Activated naive CD4-positive, alpha-beta T cell treated with anti-CD3 and anti-CD28 coated beads, Interleukin-2, amount 10 ng/mL, durations not matched to agents 7 days and 5 days (primary cell): ENCODE measurements at regions of chr10 and their contacts with region 1.

Region 1: GRCh38 chr10:13180788-13181187 is 19.4 kb downstream of the MCM10 start:
- DNase-seq: no peak
- H3K4me3 Mint-ChIP-seq: no peak overlapping the region
- H3K27ac Mint-ChIP-seq: no peak overlapping the region
- H3K4me1 Mint-ChIP-seq: no peaks in the 10 kb centered on the region
- H3K27me3 Mint-ChIP-seq: no peaks in the 10 kb centered on the region

Region 2: DNA sequence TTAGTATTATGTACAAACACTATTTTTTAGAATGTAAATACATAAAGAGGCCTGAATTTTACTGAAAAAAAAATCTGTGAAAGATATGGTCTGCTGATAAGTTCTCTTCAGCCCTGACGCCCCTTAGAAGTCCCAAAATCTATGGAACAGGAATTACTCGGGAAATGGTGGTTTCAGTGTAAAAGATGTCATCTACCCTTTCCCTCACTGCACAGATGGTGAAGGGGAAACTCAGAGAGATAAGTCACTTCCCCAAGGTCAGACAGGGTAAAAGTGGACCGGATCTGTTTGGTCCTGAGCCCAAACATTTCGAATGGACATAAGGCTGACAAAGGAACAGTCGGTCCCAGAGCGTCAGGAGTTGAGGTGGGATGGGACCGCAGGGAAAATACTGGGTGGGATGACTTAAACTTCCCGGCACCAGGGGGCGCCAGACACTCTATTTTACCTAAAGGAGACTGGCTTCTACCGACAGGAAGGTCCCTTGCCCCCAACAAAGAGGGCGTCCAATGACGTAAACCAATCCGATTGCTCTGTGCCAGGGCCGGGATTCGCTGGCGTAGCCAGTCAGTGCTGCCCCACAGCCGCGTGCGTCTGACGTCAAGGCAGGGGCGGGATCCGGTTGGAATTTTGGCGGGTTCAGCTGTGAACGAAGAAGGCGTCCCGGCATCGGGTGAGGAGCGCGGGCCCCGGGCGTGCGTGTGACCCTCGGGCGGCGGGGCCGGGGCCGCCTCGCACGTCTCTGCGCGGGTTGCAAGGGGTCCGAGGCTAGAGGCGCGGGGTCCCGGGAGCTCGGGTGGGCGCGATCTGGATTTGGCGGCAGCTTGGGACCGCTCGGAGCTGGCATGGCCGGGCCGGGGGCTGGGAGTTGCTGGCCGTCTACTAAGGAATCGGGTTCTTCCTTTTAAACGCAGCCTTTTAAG is 19.6 kb before region 1 on chr10 and contains the start of gene MCM10:
- CTCF ChIA-PET with region 1: interaction called, 10 read pairs
- DNase-seq: peak; percentile 99
- H3K4me3 Mint-ChIP-seq: peak within 1 kb of the TSS; percentile 88
- H3K27ac Mint-ChIP-seq: peak within 1 kb of the TSS; percentile 81
- H3K4me1 Mint-ChIP-seq: peaks cover 34% of the 10 kb centered on the region
- H3K27me3 Mint-ChIP-seq: no peaks in the 10 kb centered on the region

Region 3: GRCh38 chr10:13247784-13248183 is 67.0 kb after region 1 on chr10:
- CTCF ChIA-PET with region 1: no interaction called
- DNase-seq: no peak
- H3K4me3 Mint-ChIP-seq: no peak overlapping the region
- H3K27ac Mint-ChIP-seq: no peak overlapping the region
- H3K4me1 Mint-ChIP-seq: no peaks in the 10 kb centered on the region
- H3K27me3 Mint-ChIP-seq: peaks cover 9% of the 10 kb centered on the region